Motor neuron (in vitro differentiated cells): ENCODE measurements at regions of chr1 and their contacts with region 1.

Region 1: DNA sequence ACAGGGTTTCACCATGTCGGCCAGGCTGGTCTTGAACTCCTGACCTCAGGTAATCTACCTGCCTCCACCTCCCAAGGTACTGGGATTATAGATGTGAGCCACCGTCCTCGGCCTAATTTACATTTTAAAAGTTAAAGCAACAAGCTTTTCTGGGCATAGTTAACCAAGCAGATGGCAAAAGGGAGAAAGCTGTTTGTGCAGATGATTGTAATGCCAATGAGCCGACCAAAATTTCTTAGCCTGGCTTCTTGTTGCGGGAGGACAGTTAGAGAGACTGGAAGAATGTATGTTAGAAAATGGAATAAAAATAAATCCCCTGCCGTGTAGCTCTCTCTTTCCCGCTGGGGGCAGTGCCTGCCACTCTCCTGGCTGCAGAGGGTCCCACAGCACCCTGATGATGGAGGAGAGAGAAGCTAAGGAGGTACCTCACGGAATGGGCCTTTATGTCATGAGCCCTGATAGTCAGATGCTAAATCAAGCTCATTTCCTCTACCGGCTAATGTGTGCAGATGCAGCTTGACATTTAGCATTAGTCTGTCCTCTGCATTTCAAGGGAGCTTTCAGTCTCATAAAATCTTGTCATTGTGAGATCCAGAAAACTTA is 87.2 kb downstream of the HHAT start:
- ATAC-seq: peak in 4 of 8 experiments; percentile 28 to 53 (median 29)
- H3K4me3 ChIP-seq: no peak overlapping the region
- H3K27ac ChIP-seq: no peak overlapping the region
- H3K4me1 ChIP-seq: no peaks in the 10 kb centered on the region

Region 2: DNA sequence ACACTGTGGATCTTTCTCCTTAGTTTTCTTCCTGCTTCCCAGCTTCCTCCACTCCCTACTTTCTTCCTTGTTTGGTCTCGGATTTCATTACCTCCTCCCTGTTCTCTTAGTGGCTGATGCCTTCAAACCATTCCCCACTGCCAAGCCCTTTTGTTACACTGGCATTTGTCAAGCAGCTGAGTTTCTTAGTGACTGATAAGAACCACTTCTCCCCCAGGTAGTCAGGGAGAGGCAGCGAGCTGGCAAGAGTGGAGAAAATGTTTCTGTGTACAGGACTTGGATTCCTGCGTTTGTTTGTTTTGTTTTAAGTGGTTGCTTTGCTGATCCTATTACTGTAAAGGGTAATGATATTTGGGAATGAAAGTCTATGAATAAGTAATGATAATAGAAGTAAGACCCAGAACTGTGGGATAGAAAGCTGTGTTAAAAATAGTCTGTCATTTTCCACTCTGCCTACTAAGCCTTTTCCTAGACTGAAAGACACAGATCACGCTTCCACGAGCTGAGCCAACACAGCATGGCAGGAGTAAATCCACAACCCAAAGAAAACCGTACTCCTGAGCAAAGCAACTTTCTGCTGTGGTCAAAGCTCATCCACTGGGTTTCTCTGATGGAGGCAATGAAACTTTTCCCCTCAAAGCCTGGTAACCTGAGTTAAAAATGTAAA is 193.5 kb before region 1 on chr1:
- in situ Hi-C with region 1: no loop called
- ATAC-seq: peak in 4 of 8 experiments; percentile 51 to 81 (median 68)
- H3K4me3 ChIP-seq: no peak overlapping the region
- H3K27ac ChIP-seq: no peak overlapping the region
- H3K4me1 ChIP-seq: peaks cover 7 to 19% of the 10 kb centered on the region in 2 donors

Region 3: DNA sequence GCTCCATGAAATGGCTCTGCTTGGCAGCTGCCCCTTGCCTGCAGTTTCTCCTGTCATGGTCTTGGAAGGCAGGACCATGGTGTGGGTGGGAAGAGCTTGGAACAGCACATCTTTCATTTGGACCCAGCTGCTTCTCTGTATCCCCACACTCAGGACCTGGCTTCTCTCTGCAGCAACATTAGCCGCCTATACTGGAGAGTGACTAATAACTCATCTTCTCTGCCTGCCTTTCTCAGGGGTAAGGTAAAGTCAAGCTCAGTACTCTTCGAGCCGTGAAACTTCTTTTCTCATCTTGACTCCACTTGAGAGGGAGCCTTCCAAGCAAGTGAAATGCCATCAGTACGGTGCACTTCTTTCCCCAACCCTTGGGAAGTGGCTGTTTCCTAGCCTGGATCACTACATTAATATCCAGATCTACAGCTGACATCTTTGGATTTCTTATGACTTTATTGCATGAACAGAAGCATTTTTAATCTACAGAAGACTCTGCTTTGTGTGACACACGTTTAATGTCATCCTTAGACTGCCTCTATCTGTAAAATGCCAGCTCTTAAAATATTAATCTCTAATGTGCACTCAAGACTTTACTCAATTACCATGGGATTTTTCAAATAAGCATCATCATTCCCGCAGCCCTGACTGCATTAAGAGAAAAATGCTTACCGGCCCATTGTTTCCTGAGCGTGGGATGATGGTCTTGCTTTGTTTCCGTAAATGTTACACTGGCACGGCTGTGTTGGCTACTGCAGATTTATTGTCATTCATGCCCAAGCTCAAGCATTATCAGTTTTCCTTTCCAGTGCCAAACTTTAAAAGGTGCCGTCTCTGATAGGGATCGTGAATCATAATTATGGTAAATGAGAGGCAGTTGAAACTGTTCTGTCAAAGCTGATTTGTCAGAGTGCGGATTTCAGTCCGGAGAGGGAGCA is 155.7 kb after region 1 on chr1:
- in situ Hi-C with region 1: loop called in 1 of 9 experiments (anchors 10 kb)
- ATAC-seq: peak in 2 of 8 experiments; percentile 56 to 61
- H3K4me3 ChIP-seq: no peak overlapping the region
- H3K27ac ChIP-seq: no peak overlapping the region
- H3K4me1 ChIP-seq: peaks cover 5 to 26% of the 10 kb centered on the region in 2 donors